ENCODE measurements at regions of chr9 and their contacts with region 1.

Region 1: GRCh38 chr9:13033959-13034693 is 245.4 kb downstream of the MPDZ start:
- DNase-seq: peak; percentile 75
- H3K4me3 ChIP-seq: no peak overlapping the region
- H3K27ac ChIP-seq: no peak overlapping the region
- H3K4me1 ChIP-seq: no peaks in the 10 kb centered on the region
- H3K27me3 ChIP-seq: no peaks in the 10 kb centered on the region
- CTCF ChIP-seq: peak; percentile 77 to 81
- POLR2A ChIP-seq: no peak

Region 2: DNA sequence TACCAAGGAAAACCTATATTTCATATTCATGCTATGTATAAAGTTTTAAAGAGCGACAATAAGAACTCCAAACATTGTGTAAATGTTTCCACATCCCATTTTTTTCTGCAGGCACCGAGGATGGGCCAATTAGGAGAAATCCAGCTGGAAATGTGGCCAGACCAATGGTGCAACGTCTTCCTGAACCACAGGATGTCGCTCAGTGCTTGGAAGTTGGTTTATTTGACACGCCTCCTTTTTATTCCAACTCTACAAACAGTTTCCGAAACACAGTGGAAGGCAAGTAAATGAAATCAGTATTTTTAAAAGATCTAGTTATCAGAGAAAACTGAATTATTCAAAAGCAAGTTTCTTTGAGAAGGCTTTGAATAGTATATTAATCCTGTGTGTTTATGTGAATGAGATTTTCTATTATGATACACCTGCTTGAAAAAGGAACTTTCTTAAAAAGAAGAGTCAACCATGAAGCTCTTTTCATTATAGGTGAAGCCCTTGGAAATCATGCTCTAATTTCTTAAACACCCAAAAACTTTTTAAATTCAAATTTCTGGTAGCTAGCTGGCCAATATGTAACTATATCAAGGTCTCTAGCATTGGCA is 331.9 kb before region 1 on chr9:
- CTCF ChIA-PET with region 1: interaction called, 3 read pairs
- POLR2A ChIA-PET with region 1: no interaction called
- dilution Hi-C with region 1: no loop called
- intact Hi-C with region 1: loop called (anchors 5 kb)
- DNase-seq: peak; percentile 70
- H3K4me3 ChIP-seq: no peak overlapping the region
- H3K27ac ChIP-seq: no peak overlapping the region
- H3K4me1 ChIP-seq: no peaks in the 10 kb centered on the region
- H3K27me3 ChIP-seq: no peaks in the 10 kb centered on the region
- CTCF ChIP-seq: peak; percentile 58 to 62
- POLR2A ChIP-seq: no peak

Region 3: DNA sequence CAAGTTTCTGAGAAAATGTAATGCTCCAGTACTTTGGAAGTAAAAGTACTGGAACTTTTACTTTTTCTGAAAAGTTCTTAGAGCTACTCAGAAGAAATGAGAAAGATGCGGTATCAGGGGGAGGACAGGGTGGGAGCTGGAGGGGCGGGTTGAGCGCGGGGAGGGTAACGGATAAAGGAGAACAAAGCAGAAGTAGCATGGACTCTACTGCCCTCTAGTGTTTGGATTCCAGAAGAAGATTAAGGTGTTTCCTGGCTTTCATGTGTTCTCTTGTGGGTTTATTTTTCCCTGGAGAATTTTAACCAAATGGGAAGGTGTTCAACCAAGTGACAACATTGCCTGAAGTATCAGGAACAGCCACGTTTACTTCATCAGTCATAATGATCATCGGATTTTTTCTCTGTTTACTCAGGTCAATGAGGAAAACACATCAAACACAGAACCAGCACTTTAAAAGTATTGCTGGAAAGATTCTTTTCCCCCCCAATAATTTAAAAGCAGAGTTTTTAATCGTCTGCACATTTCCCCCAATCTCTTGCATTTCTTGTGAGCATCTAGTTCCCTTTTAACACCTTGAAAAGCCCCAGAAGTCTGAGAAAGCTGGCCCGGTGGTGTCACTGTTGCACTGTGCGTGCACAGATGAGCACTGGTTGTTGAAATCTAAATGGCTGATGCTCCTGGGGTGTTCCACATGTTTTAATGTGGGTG is 54.7 kb after region 1 on chr9:
- CTCF ChIA-PET with region 1: interaction called, 34 read pairs
- POLR2A ChIA-PET with region 1: no interaction called
- dilution Hi-C with region 1: no loop called
- intact Hi-C with region 1: loop called (anchors 1 kb)
- DNase-seq: peak; percentile 61
- H3K4me3 ChIP-seq: peak overlapping the region in 1 of 3 experiments; percentile 35
- H3K27ac ChIP-seq: no peak overlapping the region
- H3K4me1 ChIP-seq: peaks cover 9% of the 10 kb centered on the region
- H3K27me3 ChIP-seq: no peaks in the 10 kb centered on the region
- CTCF ChIP-seq: peak; percentile 36 to 66
- POLR2A ChIP-seq: no peak

Region 4: DNA sequence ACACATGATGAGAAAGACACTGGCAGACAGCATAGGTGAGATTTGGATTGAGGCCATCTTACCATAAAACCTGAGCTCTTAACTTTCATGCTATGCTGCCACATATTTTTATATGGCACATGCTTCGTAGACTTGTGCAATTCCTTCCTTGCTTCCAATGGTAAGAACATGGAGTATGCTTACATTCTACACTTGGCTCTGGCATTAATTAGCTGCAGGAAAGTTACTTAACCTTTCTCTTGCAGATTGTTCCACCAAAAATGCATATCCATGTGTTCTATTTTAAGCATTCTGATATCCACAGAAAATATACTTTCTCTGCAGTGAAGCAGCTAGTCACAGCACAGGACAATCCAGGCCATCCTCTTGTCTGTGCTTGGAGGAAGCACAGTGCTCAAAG is 125.9 kb after region 1 on chr9:
- CTCF ChIA-PET with region 1: no interaction called
- POLR2A ChIA-PET with region 1: no interaction called
- dilution Hi-C with region 1: no loop called
- intact Hi-C with region 1: no loop called
- DNase-seq: no peak
- H3K4me3 ChIP-seq: no peak overlapping the region
- H3K27ac ChIP-seq: no peak overlapping the region
- H3K4me1 ChIP-seq: no peaks in the 10 kb centered on the region
- H3K27me3 ChIP-seq: no peaks in the 10 kb centered on the region
- CTCF ChIP-seq: no peak
- POLR2A ChIP-seq: no peak

Region 5: DNA sequence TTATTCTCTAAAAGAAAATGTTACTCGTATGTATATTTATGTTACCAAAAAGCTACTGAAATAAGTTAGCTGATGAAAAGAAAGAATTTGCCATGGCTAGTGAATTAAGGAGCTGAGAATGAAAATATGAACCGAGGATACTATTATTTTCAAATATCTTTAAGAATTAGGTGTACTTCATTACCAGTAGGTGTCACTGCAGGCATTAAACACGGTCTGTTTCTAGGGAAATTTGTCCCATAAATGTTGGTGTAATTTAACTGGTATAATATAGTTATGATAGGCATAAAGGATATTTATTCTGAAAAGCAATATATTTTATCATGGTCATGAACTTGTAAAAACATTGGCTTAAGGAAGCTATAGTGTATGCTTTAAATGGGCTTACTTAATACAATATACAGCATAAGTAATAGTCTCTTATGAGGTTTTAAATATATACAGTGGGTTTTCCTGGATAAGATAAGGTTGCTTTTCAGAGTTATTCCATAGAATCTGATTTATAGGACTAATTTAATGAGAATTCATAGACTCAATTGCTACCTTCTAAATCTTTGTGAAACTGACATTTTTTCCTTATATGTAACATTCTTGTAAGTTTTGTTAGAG is 317.8 kb after region 1 on chr9:
- CTCF ChIA-PET with region 1: interaction called, 4 read pairs
- POLR2A ChIA-PET with region 1: no interaction called
- dilution Hi-C with region 1: no loop called
- intact Hi-C with region 1: loop called (anchors 2 kb)
- DNase-seq: peak; percentile 74
- H3K4me3 ChIP-seq: no peak overlapping the region
- H3K27ac ChIP-seq: no peak overlapping the region
- H3K4me1 ChIP-seq: no peaks in the 10 kb centered on the region
- H3K27me3 ChIP-seq: no peaks in the 10 kb centered on the region
- CTCF ChIP-seq: peak; percentile 32 to 37
- POLR2A ChIP-seq: no peak

Region 6: DNA sequence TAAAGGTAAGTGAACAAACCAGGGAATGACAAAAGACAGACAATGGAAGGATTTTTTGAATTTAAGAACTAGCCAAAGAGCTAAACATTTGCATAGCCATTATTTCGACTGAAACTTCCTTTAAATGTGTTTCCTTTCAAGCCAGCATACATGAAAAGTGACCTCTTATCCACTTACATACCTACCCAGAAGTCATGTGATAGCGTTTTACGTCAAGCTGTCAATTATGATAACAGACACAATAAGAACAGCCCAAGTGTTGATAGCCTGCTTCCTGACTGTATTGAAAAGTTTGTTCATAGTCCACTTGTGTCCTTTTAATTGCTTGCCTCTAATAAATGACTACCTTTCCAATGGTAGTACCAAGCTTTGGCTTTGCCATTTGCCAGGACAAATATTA is 1073.9 kb after region 1 on chr9:
- CTCF ChIA-PET with region 1: no interaction called
- POLR2A ChIA-PET with region 1: no interaction called
- dilution Hi-C with region 1: no loop called
- intact Hi-C with region 1: loop called (anchors 10 kb)
- DNase-seq: peak; percentile 95
- H3K4me3 ChIP-seq: no peak overlapping the region
- H3K27ac ChIP-seq: peak overlapping the region; percentile 78
- H3K4me1 ChIP-seq: peaks cover 18% of the 10 kb centered on the region
- H3K27me3 ChIP-seq: no peaks in the 10 kb centered on the region
- CTCF ChIP-seq: no peak
- POLR2A ChIP-seq: no peak

Region 7: GRCh38 chr9:14652729-14653377 is 1618.7 kb after region 1 on chr9:
- CTCF ChIA-PET with region 1: no interaction called
- POLR2A ChIA-PET with region 1: no interaction called
- dilution Hi-C with region 1: no loop called
- intact Hi-C with region 1: loop called (anchors 10 kb)
- DNase-seq: peak; percentile 54
- H3K4me3 ChIP-seq: no peak overlapping the region
- H3K27ac ChIP-seq: no peak overlapping the region
- H3K4me1 ChIP-seq: no peaks in the 10 kb centered on the region
- H3K27me3 ChIP-seq: no peaks in the 10 kb centered on the region
- CTCF ChIP-seq: peak; percentile 29 to 30
- POLR2A ChIP-seq: no peak